ENCODE measurements at regions of chr18 and their contacts with region 1.

Region 1: GRCh38 chr18:11518788-11519685 is 90.4 kb upstream of the SLC35G4 start:
- DNase-seq: peak; percentile 30
- H3K4me3 ChIP-seq: no peak overlapping the region
- H3K27ac ChIP-seq: no peak overlapping the region
- H3K4me1 ChIP-seq: no peaks in the 10 kb centered on the region
- H3K27me3 ChIP-seq: no peaks in the 10 kb centered on the region
- CTCF ChIP-seq: peak; percentile 88 to 93

Region 2: DNA sequence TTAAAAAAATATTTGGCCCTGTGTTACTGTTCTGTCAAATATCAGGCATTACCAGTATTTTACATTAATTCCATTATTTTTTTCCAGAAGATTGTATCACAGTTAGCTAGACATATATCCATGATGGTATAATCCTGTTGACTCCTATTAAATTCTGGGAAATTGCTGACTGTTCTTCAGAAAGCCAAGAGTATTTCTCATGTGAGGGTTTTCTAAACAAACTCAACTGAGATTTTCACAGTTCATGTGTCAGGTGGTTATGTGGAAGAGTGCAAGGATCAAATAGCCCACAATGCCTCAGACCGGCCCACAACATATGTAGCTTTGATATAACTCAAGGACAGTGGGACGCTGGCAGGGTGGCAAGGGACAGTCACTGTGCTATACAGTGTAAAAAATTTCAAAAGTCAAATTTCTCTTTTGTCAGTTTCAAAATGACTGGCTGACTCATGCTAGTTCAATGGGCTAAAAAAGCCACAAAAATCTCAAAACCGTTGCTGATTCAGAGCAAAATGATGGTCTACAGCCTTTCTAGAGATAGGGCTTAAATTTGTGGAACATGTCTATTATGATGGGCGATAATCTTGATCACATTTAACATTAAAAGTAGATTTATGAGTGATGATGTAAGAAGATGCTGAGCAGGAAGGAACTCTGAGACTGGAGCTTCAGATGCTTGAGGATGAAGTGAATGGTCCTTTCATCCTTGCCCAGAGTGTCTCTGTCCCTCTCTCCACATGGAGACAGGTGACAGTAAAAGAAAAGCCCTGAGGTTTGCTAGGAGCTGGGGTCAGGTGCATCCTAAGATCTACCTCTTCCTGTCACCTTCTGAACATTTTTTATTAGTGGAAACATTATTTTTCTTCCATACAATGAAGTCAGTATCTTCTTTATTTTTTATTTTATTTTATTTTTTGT is 193.8 kb before region 1 on chr18:
- CTCF ChIA-PET with region 1: no interaction called
- dilution Hi-C with region 1: no loop called
- in situ Hi-C with region 1: loop called in 1 of 2 experiments (anchors 10 kb)
- intact Hi-C with region 1: loop called (anchors 5 kb)
- DNase-seq: peak; percentile 43
- H3K4me3 ChIP-seq: no peak overlapping the region
- H3K27ac ChIP-seq: peak overlapping the region; percentile 29
- H3K4me1 ChIP-seq: peaks cover 14% of the 10 kb centered on the region
- H3K27me3 ChIP-seq: no peaks in the 10 kb centered on the region
- CTCF ChIP-seq: no peak

Region 3: GRCh38 chr18:11407940-11408339 is 111.1 kb before region 1 on chr18:
- CTCF ChIA-PET with region 1: no interaction called
- dilution Hi-C with region 1: no loop called
- in situ Hi-C with region 1: loop called in 1 of 2 experiments (anchors 25 kb)
- intact Hi-C with region 1: no loop called
- DNase-seq: no peak
- H3K4me3 ChIP-seq: no peak overlapping the region
- H3K27ac ChIP-seq: no peak overlapping the region
- H3K4me1 ChIP-seq: no peaks in the 10 kb centered on the region
- H3K27me3 ChIP-seq: peaks cover 2% of the 10 kb centered on the region
- CTCF ChIP-seq: no peak

Region 4: DNA sequence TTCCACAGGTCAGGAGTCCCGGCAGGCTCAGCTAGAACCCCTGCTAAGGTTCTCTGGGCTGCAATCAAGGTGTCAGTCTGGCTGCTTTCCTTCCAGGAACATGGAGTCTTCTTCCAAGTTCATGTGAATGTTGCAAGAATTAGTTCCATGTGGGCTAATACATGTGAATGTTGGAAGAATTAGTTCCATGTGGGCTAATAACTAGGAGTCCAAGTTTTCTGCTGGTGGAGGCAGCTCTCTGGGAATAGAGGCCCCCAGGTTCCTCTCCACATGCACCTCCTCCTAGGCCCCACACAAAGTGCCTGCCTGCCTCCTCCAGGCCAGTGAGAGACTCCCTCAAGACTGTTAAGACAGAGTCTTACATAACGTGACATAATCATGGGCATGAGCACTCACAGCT is 50.4 kb before region 1 on chr18:
- CTCF ChIA-PET with region 1: no interaction called
- dilution Hi-C with region 1: no loop called
- in situ Hi-C with region 1: no loop called
- intact Hi-C with region 1: loop called (anchors 10 kb)
- DNase-seq: no peak
- H3K4me3 ChIP-seq: no peak overlapping the region
- H3K27ac ChIP-seq: no peak overlapping the region
- H3K4me1 ChIP-seq: no peaks in the 10 kb centered on the region
- H3K27me3 ChIP-seq: no peaks in the 10 kb centered on the region
- CTCF ChIP-seq: no peak

Measured in mammary epithelial cell (primary cell).